ENCODE measurements at regions of chr7 and their contacts with region 1.

Region 1: GRCh38 chr7:55185941-55186609 is 167.3 kb downstream of the EGFR start:
- DNase-seq: peak; percentile 97 to 99
- H3K4me3 ChIP-seq: no peak overlapping the region
- H3K27ac ChIP-seq: peak overlapping the region; percentile 51
- H3K4me1 ChIP-seq: peaks cover 27% of the 10 kb centered on the region
- H3K27me3 ChIP-seq: no peaks in the 10 kb centered on the region
- CTCF ChIP-seq: no peak

Region 2: DNA sequence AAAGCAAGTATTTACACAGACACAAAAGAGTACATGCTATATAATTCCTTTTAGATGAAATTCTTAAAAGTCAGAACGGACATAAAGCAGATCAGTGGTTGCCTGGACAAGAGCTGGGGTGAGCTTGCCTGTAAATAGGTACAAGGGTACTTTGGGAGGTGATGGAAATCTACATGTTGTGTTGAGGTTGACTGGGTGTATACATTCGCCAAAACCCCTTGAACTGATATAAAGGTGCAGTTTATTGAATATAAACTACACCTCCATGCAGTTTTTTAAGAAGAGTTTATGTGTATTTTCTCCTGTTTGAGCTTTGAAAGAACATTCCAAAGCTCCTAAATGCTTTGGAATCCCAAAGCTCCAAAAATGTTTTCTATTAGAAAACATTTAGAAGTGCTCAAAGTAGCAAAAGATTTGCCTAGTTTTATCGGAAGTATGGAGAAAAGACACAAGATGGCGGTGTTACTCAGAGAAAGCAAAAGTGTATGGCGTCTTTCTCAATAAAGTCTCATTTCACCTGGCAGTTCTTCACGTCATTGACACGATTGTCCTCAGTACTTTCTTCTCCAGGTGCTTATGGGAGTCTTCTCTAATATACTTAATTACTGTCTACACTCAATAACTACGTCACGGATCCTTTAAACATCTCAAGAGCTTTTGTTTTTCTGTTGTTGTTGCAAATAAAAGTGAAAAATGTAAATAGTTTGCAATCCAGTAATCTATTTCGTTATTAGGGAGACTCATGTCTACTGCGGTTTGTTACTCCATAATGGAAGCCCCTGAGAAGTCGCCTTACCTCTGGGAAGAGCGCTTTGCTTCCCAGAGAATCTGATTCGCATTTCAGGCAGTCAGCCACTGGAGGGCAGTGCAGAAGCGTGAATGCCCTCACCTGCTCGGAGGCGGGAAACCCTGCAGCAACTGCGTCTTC is 412.3 kb before region 1 on chr7:
- CTCF ChIA-PET with region 1: no interaction called
- POLR2A ChIA-PET with region 1: no interaction called
- intact Hi-C with region 1: loop called (anchors 5 kb)
- DNase-seq: peak; percentile 94
- H3K4me3 ChIP-seq: peak overlapping the region; percentile 58
- H3K27ac ChIP-seq: peak overlapping the region; percentile 67
- H3K4me1 ChIP-seq: peaks cover 20% of the 10 kb centered on the region
- H3K27me3 ChIP-seq: no peaks in the 10 kb centered on the region
- CTCF ChIP-seq: peak; percentile 100

Region 3: DNA sequence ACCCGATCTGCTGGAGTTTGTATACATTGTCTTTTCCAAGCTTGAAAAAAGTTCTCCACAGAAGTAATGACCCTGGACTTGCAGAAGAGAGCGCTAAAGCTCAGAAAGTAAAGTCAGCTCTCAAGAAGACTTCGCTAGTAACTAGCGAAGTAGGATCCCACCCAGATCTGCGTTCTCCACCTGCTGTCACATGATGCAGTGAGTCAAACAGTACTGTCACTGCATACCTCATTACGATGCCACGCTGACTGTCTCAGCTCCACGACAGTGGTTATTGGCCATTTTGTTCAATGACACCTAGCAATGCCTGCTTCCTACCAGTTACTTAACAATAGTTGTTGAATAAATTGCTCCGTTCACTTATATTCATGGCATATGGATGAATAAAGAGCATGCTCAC is 397.4 kb before region 1 on chr7:
- CTCF ChIA-PET with region 1: no interaction called
- POLR2A ChIA-PET with region 1: no interaction called
- intact Hi-C with region 1: loop called (anchors 1 kb)
- DNase-seq: peak; percentile 79 to 99
- H3K4me3 ChIP-seq: no peak overlapping the region
- H3K27ac ChIP-seq: peak overlapping the region; percentile 27
- H3K4me1 ChIP-seq: peaks cover 29% of the 10 kb centered on the region
- H3K27me3 ChIP-seq: no peaks in the 10 kb centered on the region
- CTCF ChIP-seq: peak; percentile 95

Region 4: GRCh38 chr7:55026866-55027490 is 159.1 kb before region 1 on chr7:
- CTCF ChIA-PET with region 1: no interaction called
- POLR2A ChIA-PET with region 1: no interaction called
- intact Hi-C with region 1: loop called (anchors 1 kb)
- DNase-seq: peak; percentile 71 to 92
- H3K4me3 ChIP-seq: 0 out of 2 replicates have a peak overlapping the region, but pooled peaks have one; percentile 0
- H3K27ac ChIP-seq: peak overlapping the region; percentile 66
- H3K4me1 ChIP-seq: peaks cover 85% of the 10 kb centered on the region
- H3K27me3 ChIP-seq: no peaks in the 10 kb centered on the region
- CTCF ChIP-seq: no peak

Region 5: DNA sequence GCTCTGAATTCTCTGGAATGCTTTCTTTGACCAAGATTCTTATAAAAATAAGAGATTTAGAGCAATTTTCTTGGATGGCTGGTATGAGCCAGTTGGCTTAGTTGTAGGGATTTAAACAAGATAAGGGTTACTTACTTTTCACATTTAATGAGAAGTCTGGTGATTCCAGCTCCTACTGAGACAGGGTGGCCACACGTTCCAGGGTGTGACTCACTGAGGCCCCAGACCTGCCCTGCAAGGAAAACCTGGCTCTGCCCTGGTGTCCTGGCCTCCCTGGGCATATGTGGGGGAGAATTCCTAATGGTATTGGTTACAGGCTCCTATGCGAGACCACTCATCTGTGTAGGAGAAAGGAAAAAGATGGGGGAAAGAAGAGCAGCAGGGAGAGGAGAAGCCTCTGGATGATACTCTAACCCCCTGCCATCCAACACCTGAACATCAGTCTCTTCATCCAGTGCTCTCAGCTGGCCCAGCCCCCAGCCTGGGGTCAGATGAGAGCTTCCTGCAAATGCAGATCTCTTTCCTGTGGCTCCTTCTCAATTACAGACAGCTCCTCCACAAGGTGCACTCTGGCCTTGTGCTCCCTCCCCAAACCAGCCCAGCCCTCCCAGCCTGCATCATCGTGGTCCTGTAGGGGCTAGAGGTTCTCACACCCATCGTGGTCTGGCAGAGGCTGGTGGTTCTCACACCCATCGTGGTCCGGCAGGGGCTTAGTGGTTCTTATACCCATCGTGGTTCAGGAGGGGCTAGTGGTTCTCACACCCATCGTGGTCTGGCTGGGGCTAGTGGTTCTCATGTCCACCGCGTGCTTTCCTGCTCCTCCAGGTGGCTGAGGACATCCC is 27.3 kb before region 1 on chr7:
- CTCF ChIA-PET with region 1: no interaction called
- POLR2A ChIA-PET with region 1: no interaction called
- intact Hi-C with region 1: no loop called
- DNase-seq: peak; percentile 67 to 76
- H3K4me3 ChIP-seq: no peak overlapping the region
- H3K27ac ChIP-seq: peak overlapping the region; percentile 7; the same call in 1 of the 2 replicates
- H3K4me1 ChIP-seq: peaks cover 8% of the 10 kb centered on the region
- H3K27me3 ChIP-seq: no peaks in the 10 kb centered on the region
- CTCF ChIP-seq: no peak

Region 6: DNA sequence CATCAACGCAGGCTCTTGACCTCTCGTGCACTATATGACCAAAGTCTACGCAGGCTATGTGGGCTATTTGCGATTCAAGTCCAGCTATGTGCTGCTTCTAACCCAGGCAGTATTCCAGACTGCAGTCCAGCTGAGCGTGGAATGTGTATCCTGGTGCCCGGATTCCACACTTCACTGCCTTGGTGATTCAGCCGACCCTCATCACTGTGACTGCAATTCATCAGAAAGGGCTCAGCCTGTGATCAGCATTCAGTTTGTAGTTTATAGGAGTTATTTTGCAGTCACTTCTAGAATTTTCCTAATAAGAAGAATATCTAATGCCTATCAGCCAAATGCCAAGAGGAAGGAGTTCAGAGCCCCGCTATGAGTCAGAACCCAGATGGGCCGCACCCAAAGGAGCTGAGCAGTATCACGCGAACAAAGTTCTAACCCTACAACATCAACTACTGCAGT is 59.2 kb after region 1 on chr7:
- CTCF ChIA-PET with region 1: no interaction called
- POLR2A ChIA-PET with region 1: no interaction called
- intact Hi-C with region 1: no loop called
- DNase-seq: peak; percentile 63 to 72
- H3K4me3 ChIP-seq: no peak overlapping the region
- H3K27ac ChIP-seq: no peak overlapping the region
- H3K4me1 ChIP-seq: peaks cover 17% of the 10 kb centered on the region
- H3K27me3 ChIP-seq: no peaks in the 10 kb centered on the region
- CTCF ChIP-seq: no peak

Region 7: GRCh38 chr7:55400191-55400590 is 214.1 kb after region 1 on chr7:
- CTCF ChIA-PET with region 1: no interaction called
- POLR2A ChIA-PET with region 1: no interaction called
- intact Hi-C with region 1: no loop called
- DNase-seq: no peak
- H3K4me3 ChIP-seq: no peak overlapping the region
- H3K27ac ChIP-seq: no peak overlapping the region
- H3K4me1 ChIP-seq: no peaks in the 10 kb centered on the region
- H3K27me3 ChIP-seq: no peaks in the 10 kb centered on the region
- CTCF ChIP-seq: no peak

Region 8: DNA sequence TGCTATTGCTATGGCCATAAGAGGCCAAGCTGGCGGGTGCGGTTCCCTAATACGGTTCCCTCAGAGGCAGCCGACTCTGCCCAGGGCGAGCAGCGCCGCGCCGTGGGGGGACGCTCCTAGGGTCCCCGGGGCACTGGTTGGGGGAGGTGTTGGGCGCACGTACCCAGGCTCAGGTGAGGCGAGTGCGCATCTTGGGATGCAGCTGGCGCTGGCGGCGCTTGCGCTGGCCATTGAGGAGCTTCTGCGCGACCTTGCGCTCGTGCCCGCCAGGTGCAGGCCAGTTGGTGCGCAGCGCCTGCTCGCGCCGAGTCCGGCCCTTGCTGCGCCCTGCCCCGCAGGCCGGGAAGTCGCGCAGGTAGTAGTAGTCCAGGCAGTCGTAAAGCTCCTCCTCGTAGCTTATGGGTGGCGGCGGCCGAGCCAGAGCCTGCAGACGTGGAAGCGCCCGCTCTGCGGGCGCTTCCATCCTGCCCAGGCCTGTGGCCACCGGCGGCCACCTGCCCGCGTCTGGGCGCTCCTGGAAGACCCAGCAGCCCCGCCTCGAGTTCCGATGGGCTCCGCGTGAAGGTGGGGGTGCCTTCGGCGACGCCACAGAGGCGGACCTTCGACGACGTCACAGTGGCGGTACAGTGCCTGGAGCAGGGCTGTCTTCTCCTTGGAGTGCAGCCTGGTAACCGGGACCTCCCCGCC is 929.9 kb after region 1 on chr7 and contains the start of gene NUPR2:
- CTCF ChIA-PET with region 1: no interaction called
- POLR2A ChIA-PET with region 1: interaction called, 22 read pairs
- intact Hi-C with region 1: no loop called
- DNase-seq: no peak
- H3K4me3 ChIP-seq: no peak within 1 kb of the TSS
- H3K27ac ChIP-seq: no peak within 1 kb of the TSS
- H3K4me1 ChIP-seq: no peaks in the 10 kb centered on the region
- H3K27me3 ChIP-seq: no peaks in the 10 kb centered on the region
- CTCF ChIP-seq: no peak
- total RNA-seq, gene NUPR2: not detected in 2 replicates